Activated naive CD4-positive, alpha-beta T cell treated with anti-CD3 and anti-CD28 coated beads, Interleukin-2, amount 10 ng/mL, durations not matched to agents 7 days and 5 days (primary cell): ENCODE measurements at regions of chr11 and their contacts with region 1.

Region 1: DNA sequence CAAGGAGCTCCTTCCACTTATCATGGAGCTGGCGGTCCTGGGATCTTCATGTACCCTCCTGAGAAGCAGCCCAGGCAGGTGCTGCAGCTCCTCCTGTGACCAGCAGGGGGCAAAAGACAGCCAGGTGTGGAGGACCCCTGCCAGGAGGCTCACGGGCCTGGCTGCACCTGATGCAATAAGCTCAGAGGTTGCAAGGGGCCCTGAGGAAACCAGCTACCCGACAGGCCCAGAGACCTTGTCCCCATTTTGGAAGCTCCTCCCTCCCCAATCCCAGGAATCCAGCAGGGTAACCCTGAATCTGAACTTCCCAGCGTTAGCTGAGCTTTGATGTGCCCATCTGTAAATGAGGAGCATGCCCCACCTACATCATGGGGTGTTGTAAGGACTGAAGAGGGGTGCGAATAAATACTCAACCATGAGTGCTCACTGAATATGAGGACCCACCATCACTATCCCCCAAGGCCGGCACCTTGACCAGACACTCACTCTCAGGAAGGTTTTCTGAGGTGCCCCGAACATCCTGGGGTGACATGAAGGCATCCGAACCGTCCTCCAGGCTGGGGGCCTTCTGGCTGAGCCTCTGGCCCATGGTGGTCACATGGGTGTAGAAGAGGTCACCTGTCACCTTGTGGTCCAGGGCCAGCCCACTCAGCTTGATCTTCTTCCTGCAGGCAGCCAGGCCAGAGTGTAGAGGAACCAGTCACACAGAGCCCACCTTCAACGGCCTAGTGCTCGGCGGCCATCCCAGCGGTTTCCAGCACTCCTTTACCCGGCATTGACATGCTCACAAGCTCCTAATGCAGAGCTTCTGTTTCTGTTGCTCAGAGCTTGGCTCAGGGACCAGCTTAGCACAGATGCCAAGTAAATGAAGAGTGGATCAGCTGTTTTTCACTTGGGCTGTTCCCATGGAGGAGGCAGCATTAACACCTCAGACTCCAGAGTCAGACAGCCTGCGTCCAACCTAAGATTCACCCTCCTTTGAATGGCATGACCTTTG is 21.7 kb downstream of the SLC43A1 start:
- DNase-seq: peak; percentile 84
- H3K4me3 Mint-ChIP-seq: no peak overlapping the region
- H3K27ac Mint-ChIP-seq: peak overlapping the region; percentile 89
- H3K4me1 Mint-ChIP-seq: peaks cover 13% of the 10 kb centered on the region
- H3K27me3 Mint-ChIP-seq: no peaks in the 10 kb centered on the region

Region 2: DNA sequence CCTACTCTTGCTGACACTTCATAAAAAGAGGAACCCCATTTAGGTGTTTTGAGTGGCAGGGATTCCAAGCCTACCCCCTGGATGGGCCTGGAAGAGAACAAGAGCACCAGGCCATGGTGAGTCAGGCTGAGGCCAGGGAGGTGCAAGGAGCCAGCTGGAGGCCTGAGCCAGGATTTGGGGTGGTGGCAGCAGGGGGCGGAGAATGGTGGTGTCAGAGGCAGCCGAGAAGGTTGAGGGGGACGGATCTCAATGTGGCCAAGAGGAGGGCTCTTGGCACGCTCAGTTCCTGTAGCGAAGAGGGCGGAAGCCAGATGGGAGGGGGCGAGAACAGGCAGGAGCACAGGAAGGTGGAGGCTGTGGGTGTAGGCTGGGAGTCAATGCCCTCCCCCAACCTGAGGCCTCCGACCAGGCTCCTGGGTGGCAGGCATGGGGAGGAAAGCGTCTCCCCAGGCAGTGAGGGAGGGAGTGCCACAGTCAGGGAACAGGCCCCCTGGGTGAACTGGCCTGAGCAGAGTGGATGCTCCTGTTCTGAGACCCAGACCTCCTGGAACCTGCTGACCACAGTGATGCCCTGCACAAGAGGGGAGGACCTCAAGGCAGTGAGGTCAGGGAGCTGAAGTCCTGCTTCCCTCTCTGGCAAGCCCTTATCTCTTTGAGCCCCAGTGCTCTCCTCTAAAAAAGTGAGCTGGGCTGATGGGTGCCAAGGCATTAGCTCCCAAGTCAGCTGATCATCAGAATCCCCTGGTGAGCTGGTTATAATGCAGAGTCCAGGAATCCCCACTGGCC is 19.6 kb before region 1 on chr11:
- CTCF ChIA-PET with region 1: interaction called, 92 read pairs
- DNase-seq: peak; percentile 77
- H3K4me3 Mint-ChIP-seq: peak overlapping the region; percentile 21
- H3K27ac Mint-ChIP-seq: peak overlapping the region; percentile 46
- H3K4me1 Mint-ChIP-seq: peaks cover 39% of the 10 kb centered on the region
- H3K27me3 Mint-ChIP-seq: peaks cover 65% of the 10 kb centered on the region

Region 3: DNA sequence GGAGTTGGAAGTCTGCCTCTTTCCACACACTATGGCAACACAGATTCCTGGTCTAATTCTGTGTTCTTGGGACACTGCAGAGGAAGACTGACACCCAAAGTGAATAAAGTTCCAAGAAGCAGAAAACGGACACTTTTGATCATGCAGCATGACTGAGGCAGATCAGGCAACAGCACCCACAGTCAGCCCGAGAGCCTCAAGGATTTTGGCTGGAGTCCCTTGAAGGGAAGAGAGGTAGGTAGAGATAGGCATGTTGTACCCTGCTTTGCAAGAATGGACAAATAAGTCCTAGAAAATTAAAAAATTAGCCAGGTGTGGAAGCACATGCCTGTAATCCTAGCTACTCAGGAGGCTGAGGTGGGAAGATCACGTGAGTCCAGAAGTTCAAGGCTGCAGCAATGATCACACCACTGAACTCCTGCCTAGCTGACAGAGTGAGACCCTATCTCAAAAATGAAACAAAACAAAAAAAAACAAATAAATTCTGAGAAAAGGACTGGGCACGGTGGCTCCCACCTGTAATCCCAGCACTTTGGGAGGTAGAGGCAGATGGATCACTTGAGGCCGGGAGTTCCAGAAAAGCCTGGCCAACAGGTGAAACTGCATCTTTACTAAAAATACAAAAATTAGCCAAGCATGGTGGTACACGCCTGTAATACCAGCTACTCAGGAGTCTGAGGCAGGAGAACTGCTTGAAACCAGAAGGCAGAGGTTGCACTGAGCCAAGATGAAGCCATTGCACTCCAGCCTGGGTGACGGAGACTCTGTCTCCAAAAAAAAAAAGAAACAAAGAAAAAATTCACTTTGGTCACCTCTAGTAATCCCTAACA is 14.8 kb after region 1 on chr11:
- CTCF ChIA-PET with region 1: interaction called, 115 read pairs
- DNase-seq: no peak
- H3K4me3 Mint-ChIP-seq: no peak overlapping the region
- H3K27ac Mint-ChIP-seq: no peak overlapping the region
- H3K4me1 Mint-ChIP-seq: peaks cover 29% of the 10 kb centered on the region
- H3K27me3 Mint-ChIP-seq: no peaks in the 10 kb centered on the region

Region 4: GRCh38 chr11:57530596-57531507 is 37.0 kb after region 1 on chr11 and contains the start of gene TIMM10:
- CTCF ChIA-PET with region 1: interaction called, 306 read pairs
- DNase-seq: peak; percentile 96
- H3K4me3 Mint-ChIP-seq: peak within 1 kb of the TSS; percentile 84
- H3K27ac Mint-ChIP-seq: peak within 1 kb of the TSS; percentile 93
- H3K4me1 Mint-ChIP-seq: peaks cover 44% of the 10 kb centered on the region
- H3K27me3 Mint-ChIP-seq: no peaks in the 10 kb centered on the region

Region 5: GRCh38 chr11:57644748-57645688 is 151.2 kb after region 1 on chr11:
- CTCF ChIA-PET with region 1: interaction called, 48 read pairs
- DNase-seq: peak; percentile 92
- H3K4me3 Mint-ChIP-seq: no peak overlapping the region
- H3K27ac Mint-ChIP-seq: no peak overlapping the region
- H3K4me1 Mint-ChIP-seq: peaks cover 47% of the 10 kb centered on the region
- H3K27me3 Mint-ChIP-seq: peaks cover 81% of the 10 kb centered on the region

Region 6: GRCh38 chr11:58028687-58029411 is 535.0 kb after region 1 on chr11:
- CTCF ChIA-PET with region 1: no interaction called
- DNase-seq: no peak
- H3K4me3 Mint-ChIP-seq: no peak overlapping the region
- H3K27ac Mint-ChIP-seq: no peak overlapping the region
- H3K4me1 Mint-ChIP-seq: no peaks in the 10 kb centered on the region
- H3K27me3 Mint-ChIP-seq: peaks cover 4% of the 10 kb centered on the region